ENCODE measurements at regions of chr16 and their contacts with region 1.

Region 1: DNA sequence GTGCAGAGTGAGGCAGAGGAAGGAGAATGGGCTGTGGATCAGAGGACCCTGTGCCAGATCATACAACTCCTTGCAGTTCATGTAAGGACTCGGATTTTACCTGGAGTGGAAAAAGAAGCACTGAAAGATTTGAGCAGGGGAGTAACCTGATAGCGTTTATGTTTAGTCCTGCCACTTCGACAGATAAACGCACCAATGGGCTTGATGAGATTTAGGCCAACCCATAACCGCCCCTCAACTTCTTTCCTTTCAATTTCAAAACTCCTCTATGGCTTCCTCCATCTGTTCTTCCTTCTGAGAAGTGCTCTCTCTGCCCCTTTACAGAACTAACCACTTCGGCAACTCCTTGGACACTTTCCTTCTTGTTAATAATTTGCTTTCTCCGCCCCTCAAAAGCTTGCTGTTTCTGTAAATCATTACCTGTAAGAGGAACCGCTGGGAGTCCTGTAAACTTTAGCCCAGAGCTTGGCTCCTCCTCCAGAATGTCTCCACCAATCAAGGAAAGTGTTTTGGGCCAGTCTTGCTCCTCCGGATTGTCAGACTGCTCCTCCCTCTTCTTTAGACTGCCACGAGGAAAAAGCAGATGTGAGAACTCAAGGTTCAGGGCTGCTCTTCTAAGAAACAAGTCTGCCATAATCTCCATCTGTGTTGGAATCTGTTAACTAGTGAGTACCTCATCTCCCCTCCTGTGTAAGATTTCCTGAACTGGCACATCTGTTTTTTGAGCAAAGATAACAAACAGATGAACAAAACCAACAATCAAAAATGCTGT is at the start of gene ACSM3:
- DNase-seq: peak; percentile 26
- ATAC-seq: peak; percentile 100
- H3K4me3 Mint-ChIP-seq: peak within 1 kb of the TSS; percentile 90
- H3K27ac Mint-ChIP-seq: peak within 1 kb of the TSS; percentile 93
- H3K4me1 Mint-ChIP-seq: peaks cover 15% of the 10 kb centered on the region
- H3K27me3 Mint-ChIP-seq: no peaks in the 10 kb centered on the region
- CTCF ChIP-seq: no peak
- total RNA-seq, gene ACSM3: 12.8 and 13.6 TPM in 2 replicates

Region 2: GRCh38 chr16:20747030-20747816 is 16.4 kb before region 1 on chr16:
- CTCF ChIA-PET with region 1: no interaction called
- POLR2A ChIA-PET with region 1: interaction called, 19 read pairs
- intact Hi-C with region 1: loop called (anchors 1 kb)
- DNase-seq: no peak
- ATAC-seq: no peak
- H3K4me3 Mint-ChIP-seq: no peak overlapping the region
- H3K27ac Mint-ChIP-seq: no peak overlapping the region
- H3K4me1 Mint-ChIP-seq: peaks cover under 1% of the 10 kb centered on the region
- H3K27me3 Mint-ChIP-seq: peaks cover 2% of the 10 kb centered on the region
- CTCF ChIP-seq: no peak

Region 3: DNA sequence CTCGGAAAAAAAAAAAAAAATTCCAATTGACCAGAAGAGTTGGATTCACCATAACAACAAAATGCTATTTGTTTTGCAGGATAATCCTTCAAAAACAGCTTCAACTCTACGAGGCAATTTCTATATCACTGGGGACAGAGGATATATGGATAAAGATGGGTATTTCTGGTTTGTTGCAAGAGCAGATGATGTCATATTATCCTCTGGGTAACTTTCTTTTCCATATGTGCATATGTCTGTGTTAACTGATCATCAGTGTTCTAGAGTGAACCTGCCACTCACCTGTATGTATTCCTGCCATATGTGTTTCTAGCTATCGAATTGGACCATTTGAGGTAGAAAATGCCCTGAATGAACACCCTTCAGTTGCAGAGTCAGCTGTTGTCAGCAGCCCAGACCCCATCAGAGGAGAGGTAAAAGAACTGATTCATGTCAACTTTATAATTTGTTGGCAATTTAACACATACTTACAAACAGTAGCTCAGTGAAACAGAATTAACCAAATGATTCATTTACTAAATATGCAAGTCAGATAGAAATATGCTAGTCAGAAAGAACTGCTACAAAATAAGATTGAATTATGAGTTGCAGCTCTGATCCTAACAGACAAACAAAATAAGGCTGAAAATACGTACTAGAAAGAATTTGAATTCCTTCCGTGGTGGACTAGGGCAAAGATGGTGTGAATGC is 28.4 kb after region 1 on chr16:
- CTCF ChIA-PET with region 1: no interaction called
- POLR2A ChIA-PET with region 1: no interaction called
- intact Hi-C with region 1: no loop called
- DNase-seq: no peak
- ATAC-seq: no peak
- H3K4me3 Mint-ChIP-seq: no peak overlapping the region
- H3K27ac Mint-ChIP-seq: no peak overlapping the region
- H3K4me1 Mint-ChIP-seq: no peaks in the 10 kb centered on the region
- H3K27me3 Mint-ChIP-seq: no peaks in the 10 kb centered on the region
- CTCF ChIP-seq: no peak

Region 4: DNA sequence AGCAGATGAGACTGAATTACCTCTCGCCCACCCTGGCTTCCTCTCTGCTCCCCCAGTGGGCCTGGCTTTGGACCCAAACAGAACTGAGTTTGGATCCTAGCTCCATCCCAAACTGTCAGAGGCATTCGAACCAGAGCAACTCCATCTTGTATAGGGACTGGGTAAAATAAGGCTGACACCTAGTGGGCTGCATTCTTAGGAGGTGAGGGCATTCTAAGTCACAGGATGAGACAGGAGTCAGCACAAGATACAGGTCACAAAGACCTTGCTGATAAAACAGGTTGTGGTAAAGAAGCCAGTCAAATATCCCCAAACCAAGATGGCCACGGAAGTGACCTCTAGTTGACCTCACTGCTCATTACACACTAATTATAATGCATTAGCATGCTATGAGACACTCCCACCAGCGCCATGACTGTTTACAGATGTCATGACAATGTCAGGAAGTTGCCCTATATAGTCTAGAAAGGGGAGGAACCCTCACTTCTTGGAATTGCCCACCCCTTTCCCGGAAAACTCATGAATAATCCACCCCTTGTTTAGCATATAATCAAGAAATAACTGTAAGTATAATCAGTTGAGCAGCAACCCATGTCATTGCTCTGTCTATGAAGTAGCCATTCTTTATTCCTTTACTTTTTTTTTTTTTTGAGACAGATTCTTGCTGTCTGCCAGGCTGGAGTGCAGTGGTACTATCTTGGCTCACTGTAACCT is 181.4 kb after region 1 on chr16:
- CTCF ChIA-PET with region 1: no interaction called
- POLR2A ChIA-PET with region 1: no interaction called
- intact Hi-C with region 1: no loop called
- DNase-seq: no peak
- ATAC-seq: no peak
- H3K4me3 Mint-ChIP-seq: no peak overlapping the region
- H3K27ac Mint-ChIP-seq: no peak overlapping the region
- H3K4me1 Mint-ChIP-seq: peaks cover 2% of the 10 kb centered on the region
- H3K27me3 Mint-ChIP-seq: no peaks in the 10 kb centered on the region
- CTCF ChIP-seq: no peak

Region 5: DNA sequence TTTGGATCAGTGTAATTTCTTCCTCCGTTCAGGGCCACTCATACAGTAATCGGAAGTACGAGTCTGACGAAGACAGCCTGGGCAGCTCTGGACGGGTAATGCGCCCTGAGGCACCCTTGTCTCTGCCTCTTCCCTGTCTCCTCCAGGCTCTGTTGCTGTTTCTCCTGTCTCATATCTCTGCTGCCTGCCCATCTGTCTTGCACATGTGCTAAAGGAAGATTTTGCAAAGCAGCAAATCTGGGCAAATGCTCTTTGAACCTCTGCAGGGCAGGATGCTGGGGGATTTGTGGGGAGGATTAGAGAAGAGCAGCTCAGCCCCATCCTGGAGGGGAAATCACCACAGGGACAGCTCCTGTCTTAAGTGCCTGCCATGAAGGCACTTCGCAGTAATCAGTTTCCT is 1501.1 kb after region 1 on chr16:
- CTCF ChIA-PET with region 1: no interaction called
- POLR2A ChIA-PET with region 1: no interaction called
- intact Hi-C with region 1: no loop called
- DNase-seq: no peak
- ATAC-seq: no peak
- H3K4me3 Mint-ChIP-seq: no peak overlapping the region
- H3K27ac Mint-ChIP-seq: no peak overlapping the region
- H3K4me1 Mint-ChIP-seq: no peaks in the 10 kb centered on the region
- H3K27me3 Mint-ChIP-seq: no peaks in the 10 kb centered on the region
- CTCF ChIP-seq: no peak

Measured in activated B cell treated with CpG ODN at 0.5 μM for 24 hours (primary cell).